ENCODE measurements at regions of chr9 and their contacts with region 1.

Region 1: GRCh38 chr9:98536542-98537173 is 172.1 kb downstream of the GABBR2 start:
- DNase-seq: no peak
- ATAC-seq: no peak
- H3K4me3 ChIP-seq: no peak overlapping the region
- H3K27ac ChIP-seq: no peak overlapping the region
- H3K4me1 ChIP-seq: no peaks in the 10 kb centered on the region
- H3K27me3 ChIP-seq: no peaks in the 10 kb centered on the region
- CTCF ChIP-seq: no peak

Region 2: DNA sequence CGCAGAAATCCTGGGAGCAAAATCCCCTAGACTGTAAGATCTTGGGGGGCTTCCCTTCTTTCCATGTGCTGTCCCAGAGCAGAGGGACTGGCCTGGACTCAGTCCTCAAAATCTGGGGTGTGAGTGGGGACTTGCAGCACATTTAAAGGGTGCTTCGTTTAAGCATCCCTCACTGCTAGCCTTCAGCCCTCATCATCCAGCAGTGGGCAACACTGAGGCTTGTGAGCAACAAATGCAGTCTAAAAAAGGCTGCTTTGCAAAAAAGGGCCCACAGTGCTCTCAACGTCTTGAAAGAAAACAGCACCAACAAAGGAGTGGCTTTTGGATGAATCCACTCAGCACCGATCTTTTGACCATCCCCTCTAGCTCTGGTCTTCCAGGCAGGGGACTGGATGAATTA is 152.9 kb before region 1 on chr9:
- intact Hi-C with region 1: no loop called
- DNase-seq: no peak
- ATAC-seq: no peak
- H3K4me3 ChIP-seq: no peak overlapping the region
- H3K27ac ChIP-seq: no peak overlapping the region
- H3K4me1 ChIP-seq: no peaks in the 10 kb centered on the region
- H3K27me3 ChIP-seq: no peaks in the 10 kb centered on the region
- CTCF ChIP-seq: no peak

Region 3: DNA sequence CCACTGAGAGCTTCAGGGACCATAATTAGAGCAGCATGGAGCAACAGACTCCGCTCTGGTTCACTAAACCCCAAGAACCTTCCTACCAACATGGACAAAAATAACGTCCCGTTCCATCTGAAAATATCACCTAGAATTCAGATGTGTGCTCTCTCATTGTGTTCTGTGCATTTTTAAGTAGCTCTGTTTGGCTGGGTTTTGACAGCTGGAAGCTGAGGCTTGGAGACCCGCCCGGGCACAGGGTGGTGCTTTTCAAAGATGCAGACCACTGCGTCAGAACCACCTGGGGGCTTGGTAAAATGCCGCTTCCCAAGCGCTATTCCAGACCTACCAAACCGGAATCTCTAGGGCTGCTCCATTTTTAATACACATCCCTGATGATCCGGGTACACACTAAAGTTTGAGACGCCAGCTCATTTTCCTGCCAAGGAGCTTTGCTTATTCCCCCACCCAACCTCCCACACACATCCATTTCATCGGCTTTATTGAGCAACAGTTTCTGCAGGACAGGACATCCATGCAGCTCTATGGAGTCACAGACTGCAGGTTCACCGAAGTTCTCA is 67.2 kb after region 1 on chr9:
- intact Hi-C with region 1: no loop called
- DNase-seq: no peak
- ATAC-seq: no peak
- H3K4me3 ChIP-seq: no peak overlapping the region
- H3K27ac ChIP-seq: no peak overlapping the region
- H3K4me1 ChIP-seq: no peaks in the 10 kb centered on the region
- H3K27me3 ChIP-seq: no peaks in the 10 kb centered on the region
- CTCF ChIP-seq: no peak

Region 4: DNA sequence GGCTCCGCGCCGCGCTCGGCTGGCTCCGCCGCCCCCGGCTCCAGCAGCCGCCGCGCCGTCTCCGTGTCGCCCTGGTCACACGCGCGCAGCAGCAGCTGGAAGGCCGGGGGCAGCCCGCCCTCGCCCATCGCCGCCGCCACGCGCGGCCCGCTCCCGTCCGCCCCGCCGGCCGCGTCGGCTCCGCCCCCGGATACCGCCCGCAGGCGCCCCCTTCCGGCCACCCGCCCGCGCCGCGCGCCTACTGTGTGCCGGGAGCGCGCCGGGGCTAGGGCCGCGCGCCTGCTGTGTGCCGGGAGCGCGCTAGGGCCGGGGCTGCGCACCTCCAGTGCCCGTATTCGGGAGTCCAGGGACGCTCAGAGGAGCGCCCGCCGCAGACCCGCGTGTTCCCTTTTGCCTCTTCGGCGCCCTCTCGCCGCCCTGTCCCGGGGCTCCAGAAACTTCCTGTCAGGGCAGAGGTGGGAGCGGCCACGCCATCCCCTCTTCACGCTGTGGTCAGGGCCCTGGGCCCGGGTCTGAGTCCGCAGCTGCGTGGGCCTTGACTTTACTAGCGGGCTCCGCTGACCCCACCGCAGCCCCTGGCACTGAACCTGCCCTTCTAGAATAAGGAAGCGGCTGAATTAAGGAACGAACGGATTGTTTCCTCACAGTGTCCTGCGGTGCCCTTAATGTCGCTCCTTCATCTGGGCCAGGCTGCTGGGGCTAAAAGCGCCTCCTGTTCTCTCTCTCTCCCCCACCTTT is 259.9 kb after region 1 on chr9 and contains the start of gene ANKS6:
- intact Hi-C with region 1: loop called in 1 of 2 experiments (anchors 10 kb)
- DNase-seq: peak; percentile 79 to 94 (median 82)
- ATAC-seq: peak; percentile 93
- H3K4me3 ChIP-seq: peak within 1 kb of the TSS; percentile 48 to 61
- H3K27ac ChIP-seq: peak within 1 kb of the TSS; percentile 67 to 73
- H3K4me1 ChIP-seq: peaks cover 11 to 28% of the 10 kb centered on the region in 2 donors
- H3K27me3 ChIP-seq: peaks cover 0 to 19% of the 10 kb centered on the region in 2 donors
- CTCF ChIP-seq: peak; percentile 27 to 58
- polyA plus RNA-seq, gene ANKS6: 21.7 to 31.6 (median 25.0) TPM